Naive thymus-derived CD8-positive, alpha-beta T cell (primary cell): ENCODE measurements at regions of chr1 and their contacts with region 1.

Region 1: GRCh38 chr1:58783993-58784757 is at the start of gene JUN:
- DNase-seq: peak; percentile 92 to 100 (median 98)
- ATAC-seq: peak; percentile 69 to 73
- H3K4me3 Mint-ChIP-seq: peak within 1 kb of the TSS; percentile 79 to 100 (median 92)
- H3K27ac Mint-ChIP-seq: peak within 1 kb of the TSS; percentile 93 to 100 (median 100)
- H3K4me1 Mint-ChIP-seq: peaks cover 28 to 44% (median 42%) of the 10 kb centered on the region in 4 donors
- H3K27me3 Mint-ChIP-seq: peaks cover 0 to 6% (median 0%) of the 10 kb centered on the region in 5 donors
- polyA plus RNA-seq, gene JUN: 30.7 to 59.4 (median 32.0) TPM

Region 2: DNA sequence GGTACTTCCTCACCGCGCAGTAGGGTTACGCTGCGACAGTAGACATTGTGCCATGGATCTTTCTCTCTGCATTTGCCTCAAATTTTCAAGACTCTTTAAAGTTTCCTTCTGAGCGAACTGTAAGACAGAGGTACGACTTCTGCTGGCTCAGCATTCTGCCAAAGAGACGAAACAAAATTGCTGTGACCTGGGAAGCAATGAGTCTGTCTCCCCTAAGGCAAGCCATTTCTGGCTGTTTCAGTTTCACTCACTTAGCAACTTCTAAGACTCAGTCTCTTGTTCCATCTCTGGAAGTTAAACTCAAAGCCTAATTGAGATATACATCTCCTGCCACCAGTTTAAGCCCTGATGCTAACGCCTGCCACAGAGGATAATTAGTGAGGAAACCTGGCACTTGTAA is 849.4 kb before region 1 on chr1:
- POLR2A ChIA-PET with region 1: no interaction called
- DNase-seq: no peak
- ATAC-seq: no peak
- H3K4me3 Mint-ChIP-seq: no peak overlapping the region
- H3K27ac Mint-ChIP-seq: no peak overlapping the region
- H3K4me1 Mint-ChIP-seq: no peaks in the 10 kb centered on the region
- H3K27me3 Mint-ChIP-seq: peaks cover 0 to 24% (median 5%) of the 10 kb centered on the region in 5 donors

Region 3: GRCh38 chr1:58477390-58477789 is 306.8 kb before region 1 on chr1:
- POLR2A ChIA-PET with region 1: no interaction called
- DNase-seq: no peak
- ATAC-seq: no peak
- H3K4me3 Mint-ChIP-seq: no peak overlapping the region
- H3K27ac Mint-ChIP-seq: no peak overlapping the region
- H3K4me1 Mint-ChIP-seq: peaks cover 0 to 17% (median 7%) of the 10 kb centered on the region in 4 donors
- H3K27me3 Mint-ChIP-seq: no peaks in the 10 kb centered on the region

Region 4: DNA sequence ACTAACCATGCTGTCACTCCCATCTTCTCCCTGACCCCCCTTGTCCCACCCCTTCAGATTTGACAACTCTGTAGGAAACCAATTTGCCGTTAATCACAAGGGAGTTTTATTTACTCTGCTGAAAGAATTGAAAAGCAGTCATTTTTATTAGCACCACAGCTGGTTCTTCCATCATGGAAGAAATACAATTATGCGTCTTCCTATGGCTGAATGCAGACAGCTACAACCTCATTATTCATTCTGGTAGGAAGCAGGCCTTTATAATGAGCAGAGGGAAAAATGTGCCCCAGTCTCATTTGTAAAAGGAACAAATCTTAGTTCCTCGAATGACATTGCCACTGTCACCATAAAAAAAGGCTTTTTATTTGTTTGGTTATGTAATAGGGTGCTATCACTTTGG is 35.5 kb before region 1 on chr1:
- POLR2A ChIA-PET with region 1: no interaction called
- DNase-seq: no peak
- ATAC-seq: no peak
- H3K4me3 Mint-ChIP-seq: no peak overlapping the region
- H3K27ac Mint-ChIP-seq: no peak overlapping the region
- H3K4me1 Mint-ChIP-seq: peaks cover under 1 to 26% (median 10%) of the 10 kb centered on the region in 4 donors
- H3K27me3 Mint-ChIP-seq: peaks cover 0 to 17% (median 4%) of the 10 kb centered on the region in 5 donors

Region 5: DNA sequence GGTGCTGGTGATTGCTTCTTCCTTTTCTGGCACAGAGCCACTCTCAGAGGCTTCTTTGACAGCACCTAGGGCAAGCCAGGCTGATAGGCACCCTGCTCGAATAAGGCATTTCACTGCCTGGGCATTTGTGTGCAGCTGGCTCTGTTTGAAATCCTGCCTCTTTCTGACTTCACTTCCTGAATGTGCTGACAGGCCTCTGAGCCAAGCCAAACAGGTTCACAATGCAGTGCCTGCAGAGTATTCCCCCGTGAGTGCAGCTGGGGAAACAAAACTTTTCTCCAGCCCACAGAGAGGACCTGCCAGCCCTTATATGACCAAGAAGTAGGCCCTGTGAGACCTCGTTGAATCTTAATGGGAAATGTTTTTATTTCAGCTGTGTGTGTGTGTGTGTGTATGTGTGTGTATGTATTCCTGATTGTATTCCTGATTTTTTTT is 10.8 kb before region 1 on chr1:
- POLR2A ChIA-PET with region 1: interaction called, 14 read pairs
- DNase-seq: peak in 3 of 10 donors; percentile 22 to 60 (median 30)
- ATAC-seq: peak; percentile 50 to 79
- H3K4me3 Mint-ChIP-seq: peak overlapping the region in 1 of 10 donors; percentile 43
- H3K27ac Mint-ChIP-seq: peak overlapping the region in 9 of 10 donors; percentile 7 to 93 (median 56)
- H3K4me1 Mint-ChIP-seq: peaks cover 6 to 14% (median 13%) of the 10 kb centered on the region in 4 donors
- H3K27me3 Mint-ChIP-seq: peaks cover 0 to 4% (median 0%) of the 10 kb centered on the region in 5 donors

Region 6: GRCh38 chr1:58857680-58858673 is 73.8 kb after region 1 on chr1:
- POLR2A ChIA-PET with region 1: interaction called, 13 read pairs
- DNase-seq: peak in 6 of 10 donors; percentile 27 to 65 (median 47)
- ATAC-seq: peak; percentile 89
- H3K4me3 Mint-ChIP-seq: peak overlapping the region in 9 of 10 donors; percentile 43 to 76 (median 55)
- H3K27ac Mint-ChIP-seq: peak overlapping the region; percentile 88 to 96 (median 93)
- H3K4me1 Mint-ChIP-seq: peaks cover 37 to 68% (median 64%) of the 10 kb centered on the region in 4 donors
- H3K27me3 Mint-ChIP-seq: no peaks in the 10 kb centered on the region

Region 7: DNA sequence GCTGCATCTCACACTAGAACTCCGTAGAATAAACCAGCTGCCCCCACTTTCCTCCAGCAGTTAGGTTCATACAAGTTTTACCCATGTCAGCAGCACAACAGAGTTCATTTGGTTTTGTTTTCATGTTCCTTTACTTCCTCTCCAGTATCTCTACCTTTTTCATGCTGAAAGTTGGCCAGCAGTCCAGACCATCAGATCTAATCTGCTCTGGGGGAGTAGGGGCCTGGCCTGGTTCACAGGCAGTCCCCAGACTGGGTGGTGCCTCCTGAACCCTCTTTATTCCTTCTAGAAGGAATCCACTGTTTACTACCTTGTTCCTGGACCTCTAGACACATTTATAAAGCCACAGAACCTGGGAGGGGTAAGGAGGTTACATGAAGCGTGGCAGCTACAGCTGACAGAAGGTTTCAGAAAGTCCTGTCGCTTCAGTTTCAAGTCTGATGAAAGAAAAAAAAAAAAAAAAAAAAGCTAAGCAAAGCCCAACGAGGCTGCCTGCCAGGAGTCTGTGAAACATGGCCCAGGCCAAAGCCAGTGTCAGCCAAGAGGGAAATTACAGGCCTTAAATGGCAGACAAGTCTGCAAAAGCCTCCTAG is 184.3 kb after region 1 on chr1:
- POLR2A ChIA-PET with region 1: interaction called, 13 read pairs
- DNase-seq: peak in 6 of 10 donors; percentile 4 to 61 (median 34)
- ATAC-seq: peak; percentile 82 to 85
- H3K4me3 Mint-ChIP-seq: peak overlapping the region; percentile 50 to 83 (median 73)
- H3K27ac Mint-ChIP-seq: peak overlapping the region; percentile 56 to 99 (median 94)
- H3K4me1 Mint-ChIP-seq: peaks cover 27 to 59% (median 42%) of the 10 kb centered on the region in 4 donors
- H3K27me3 Mint-ChIP-seq: no peaks in the 10 kb centered on the region

Region 8: GRCh38 chr1:59296358-59297256 is 512.4 kb after region 1 on chr1 and contains the start of gene FGGY:
- POLR2A ChIA-PET with region 1: interaction called, 20 read pairs
- DNase-seq: peak; percentile 79 to 94 (median 86)
- ATAC-seq: peak; percentile 93 to 94
- H3K4me3 Mint-ChIP-seq: peak within 1 kb of the TSS; percentile 86 to 96 (median 93)
- H3K27ac Mint-ChIP-seq: peak within 1 kb of the TSS; percentile 92 to 98 (median 96)
- H3K4me1 Mint-ChIP-seq: peaks cover 12 to 48% (median 21%) of the 10 kb centered on the region in 4 donors
- H3K27me3 Mint-ChIP-seq: no peaks in the 10 kb centered on the region
- polyA plus RNA-seq, gene FGGY: 5.7 to 6.4 (median 5.8) TPM